WTC11 (cell line): ENCODE measurements at regions of chr17 and their contacts with region 1.

Region 1: DNA sequence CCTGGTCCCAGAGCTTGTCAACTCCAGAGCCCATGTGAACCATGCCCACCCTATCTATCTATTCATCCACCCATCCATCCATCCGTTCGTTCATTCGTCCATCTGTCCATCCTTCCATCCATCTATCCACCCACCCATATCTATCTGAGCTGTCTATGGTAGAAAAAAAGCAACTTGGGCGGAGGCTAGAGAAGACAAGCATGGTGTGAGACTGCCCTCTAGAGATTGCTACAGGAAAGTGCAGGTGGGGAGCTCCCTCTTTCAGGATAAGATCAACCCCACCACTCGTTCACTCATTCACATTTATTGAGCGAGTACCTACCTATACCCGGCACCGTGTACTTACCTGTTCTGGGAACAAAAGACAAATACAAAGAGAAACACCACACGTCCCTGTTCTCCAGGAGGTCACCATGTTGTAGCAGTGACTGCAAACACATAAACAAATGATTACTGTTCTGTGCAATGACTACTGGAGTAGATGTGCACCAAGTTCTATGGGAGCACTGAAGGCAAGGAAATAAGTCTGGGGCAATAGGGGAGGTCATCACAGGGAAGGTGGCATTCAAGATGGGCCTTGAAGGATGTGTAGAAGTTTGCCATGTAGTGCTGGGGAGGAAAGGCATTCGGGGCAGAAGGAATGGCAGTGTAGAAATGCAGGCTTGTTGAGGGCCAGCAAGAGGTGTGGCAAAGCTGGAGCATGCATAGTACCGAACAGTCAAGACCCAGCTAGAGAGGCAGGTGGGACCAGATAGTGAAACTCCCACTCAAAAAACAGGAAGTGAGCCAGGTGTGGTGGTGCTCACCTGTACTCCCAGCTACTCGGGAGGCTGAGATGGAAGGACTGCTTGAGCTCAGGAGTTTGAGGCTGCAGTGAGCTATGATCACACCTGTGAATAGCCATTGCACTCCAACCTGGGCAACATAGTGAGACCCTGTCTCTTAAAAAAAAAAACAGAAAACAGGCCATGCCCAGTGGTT is 13.4 kb upstream of the ATP5MC1 start:
- DNase-seq: peak; percentile 68
- ATAC-seq: peak; percentile 83
- H3K4me3 Mint-ChIP-seq: no peak overlapping the region
- H3K27ac Mint-ChIP-seq: no peak overlapping the region
- H3K4me1 Mint-ChIP-seq: no peaks in the 10 kb centered on the region
- H3K27me3 Mint-ChIP-seq: no peaks in the 10 kb centered on the region
- CTCF ChIP-seq: peak; percentile 95

Region 2: GRCh38 chr17:48636177-48637018 is 242.8 kb before region 1 on chr17:
- CTCF ChIA-PET with region 1: interaction called, 32 read pairs
- POLR2A ChIA-PET with region 1: no interaction called
- DNase-seq: peak; percentile 99
- ATAC-seq: peak; percentile 89
- H3K4me3 Mint-ChIP-seq: peak overlapping the region; percentile 45
- H3K27ac Mint-ChIP-seq: no peak overlapping the region
- H3K4me1 Mint-ChIP-seq: peaks cover 18% of the 10 kb centered on the region
- H3K27me3 Mint-ChIP-seq: peaks cover 100% of the 10 kb centered on the region; the same call in 1 of the 2 replicates
- CTCF ChIP-seq: peak; percentile 62

Region 3: GRCh38 chr17:48690655-48691054 is 188.6 kb before region 1 on chr17:
- CTCF ChIA-PET with region 1: interaction called, 11 read pairs
- POLR2A ChIA-PET with region 1: no interaction called
- DNase-seq: no peak
- ATAC-seq: no peak
- H3K4me3 Mint-ChIP-seq: no peak overlapping the region
- H3K27ac Mint-ChIP-seq: no peak overlapping the region
- H3K4me1 Mint-ChIP-seq: no peaks in the 10 kb centered on the region
- H3K27me3 Mint-ChIP-seq: no peaks in the 10 kb centered on the region; the same call in none of the 2 replicates
- CTCF ChIP-seq: no peak

Region 4: GRCh38 chr17:48756830-48757251 is 122.4 kb before region 1 on chr17:
- CTCF ChIA-PET with region 1: interaction called, 12 read pairs
- POLR2A ChIA-PET with region 1: no interaction called
- DNase-seq: no peak
- ATAC-seq: no peak
- H3K4me3 Mint-ChIP-seq: no peak overlapping the region
- H3K27ac Mint-ChIP-seq: no peak overlapping the region
- H3K4me1 Mint-ChIP-seq: peaks cover 16% of the 10 kb centered on the region
- H3K27me3 Mint-ChIP-seq: peaks cover 99% of the 10 kb centered on the region
- CTCF ChIP-seq: no peak

Region 5: GRCh38 chr17:48799069-48799723 is 80.0 kb before region 1 on chr17:
- CTCF ChIA-PET with region 1: interaction called, 245 read pairs
- POLR2A ChIA-PET with region 1: interaction called, 3 read pairs
- DNase-seq: no peak
- ATAC-seq: no peak
- H3K4me3 Mint-ChIP-seq: no peak overlapping the region
- H3K27ac Mint-ChIP-seq: no peak overlapping the region
- H3K4me1 Mint-ChIP-seq: no peaks in the 10 kb centered on the region; the same call in 1 of the 2 replicates
- H3K27me3 Mint-ChIP-seq: no peaks in the 10 kb centered on the region
- CTCF ChIP-seq: no peak

Region 6: DNA sequence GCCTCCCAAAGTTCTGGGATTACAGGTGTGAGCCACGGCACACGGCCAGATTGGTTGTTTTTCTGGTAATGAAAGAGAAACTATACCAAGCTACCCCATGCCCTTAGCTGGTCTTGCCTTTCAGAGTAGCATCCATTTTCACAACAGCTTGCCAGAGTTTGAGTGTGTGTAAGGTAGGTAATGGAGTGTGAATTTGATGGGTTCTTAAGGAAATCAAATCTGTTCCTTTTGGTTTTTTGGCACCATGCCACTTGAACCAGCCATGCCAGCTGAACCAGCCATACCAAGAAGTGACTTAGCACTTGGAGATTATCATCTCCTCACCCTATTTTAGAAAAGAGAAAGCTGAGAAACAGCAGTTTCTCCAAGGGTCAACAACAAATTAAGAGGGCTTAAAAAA is 43.2 kb before region 1 on chr17:
- CTCF ChIA-PET with region 1: interaction called, 19 read pairs
- POLR2A ChIA-PET with region 1: no interaction called
- DNase-seq: no peak
- ATAC-seq: no peak
- H3K4me3 Mint-ChIP-seq: no peak overlapping the region
- H3K27ac Mint-ChIP-seq: no peak overlapping the region
- H3K4me1 Mint-ChIP-seq: peaks cover 7% of the 10 kb centered on the region
- H3K27me3 Mint-ChIP-seq: no peaks in the 10 kb centered on the region; the same call in 1 of the 2 replicates
- CTCF ChIP-seq: no peak

Region 7: DNA sequence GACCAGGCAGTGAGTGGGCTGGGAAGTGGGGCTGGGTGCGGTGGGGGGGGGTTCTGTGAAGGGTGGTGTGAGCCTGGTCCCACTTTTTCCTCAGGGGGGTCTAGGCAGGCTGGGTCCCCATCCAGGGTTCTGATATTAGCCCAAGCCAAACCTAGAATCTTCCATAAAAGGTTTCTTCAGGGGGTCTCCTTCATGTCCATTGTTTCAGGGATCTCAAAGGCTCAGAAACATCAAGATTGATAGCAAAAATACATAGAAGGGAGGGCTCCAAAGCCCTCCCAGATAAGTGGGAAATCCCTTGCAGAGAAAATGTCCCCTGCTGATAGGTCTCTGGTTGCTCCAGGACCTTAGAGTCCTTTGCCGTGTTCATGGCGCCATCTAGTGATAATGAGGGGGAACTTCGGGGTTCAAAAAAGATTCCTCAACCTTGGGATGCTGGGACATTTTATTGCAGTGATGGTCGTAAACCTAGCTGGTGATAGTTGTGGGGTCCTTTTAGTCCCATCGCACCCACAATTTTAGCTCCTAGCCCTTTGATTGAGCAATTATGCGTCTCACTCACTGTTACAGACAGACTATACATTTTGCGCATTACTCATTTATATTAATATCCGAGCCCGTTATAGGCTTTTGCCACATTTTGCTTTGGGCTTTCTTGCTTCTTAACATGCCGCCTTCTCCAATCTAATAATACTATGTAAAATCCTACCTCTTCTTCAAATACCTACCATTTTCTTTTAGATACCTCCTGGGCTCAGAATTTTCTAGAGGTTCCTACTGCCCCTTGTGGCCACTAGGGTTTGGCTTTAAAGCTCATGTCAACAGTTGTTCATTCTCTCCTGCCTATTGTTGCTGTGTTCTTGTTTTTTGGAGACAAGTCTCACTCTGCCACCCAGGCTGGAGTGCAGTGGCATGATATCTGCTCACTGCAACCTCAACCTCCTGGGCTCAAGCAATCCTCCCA is 153.0 kb after region 1 on chr17:
- CTCF ChIA-PET with region 1: interaction called, 13 read pairs
- POLR2A ChIA-PET with region 1: no interaction called
- DNase-seq: peak; percentile 46
- ATAC-seq: peak; percentile 34
- H3K4me3 Mint-ChIP-seq: no peak overlapping the region
- H3K27ac Mint-ChIP-seq: peak overlapping the region; percentile 95
- H3K4me1 Mint-ChIP-seq: peaks cover 29% of the 10 kb centered on the region
- H3K27me3 Mint-ChIP-seq: no peaks in the 10 kb centered on the region
- CTCF ChIP-seq: peak; percentile 73